ENCODE measurements at regions of chr1 and their contacts with region 1.

Region 1: GRCh38 chr1:65939636-65940035 is 146.9 kb downstream of the PDE4B start:
- DNase-seq: no peak
- H3K4me3 Mint-ChIP-seq: no peak overlapping the region
- H3K27ac Mint-ChIP-seq: no peak overlapping the region
- H3K4me1 Mint-ChIP-seq: no peaks in the 10 kb centered on the region
- H3K27me3 Mint-ChIP-seq: peaks cover 8% of the 10 kb centered on the region

Region 2: DNA sequence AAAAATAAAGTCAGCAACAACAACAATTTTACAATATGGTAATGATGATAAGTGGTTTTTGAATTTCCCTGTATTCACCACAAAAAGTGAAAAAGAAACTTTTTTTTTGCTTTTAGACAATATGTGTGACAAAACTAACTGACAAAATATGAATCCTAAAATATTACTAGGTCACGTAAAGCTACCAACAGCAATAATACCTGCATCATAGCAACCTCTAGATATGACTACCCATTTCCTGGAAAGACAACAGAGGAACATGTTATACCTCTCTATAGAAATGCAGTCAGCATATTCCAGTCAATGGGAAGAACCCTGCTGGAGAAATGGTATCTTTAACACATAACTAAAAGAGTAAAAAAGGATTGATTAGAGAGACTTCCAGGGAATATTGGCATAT is 73.2 kb before region 1 on chr1:
- CTCF ChIA-PET with region 1: no interaction called
- intact Hi-C with region 1: loop called (anchors 2 kb)
- DNase-seq: no peak
- H3K4me3 Mint-ChIP-seq: no peak overlapping the region
- H3K27ac Mint-ChIP-seq: no peak overlapping the region
- H3K4me1 Mint-ChIP-seq: no peaks in the 10 kb centered on the region
- H3K27me3 Mint-ChIP-seq: peaks cover 13% of the 10 kb centered on the region